ENCODE measurements at regions of chr11 and their contacts with region 1.

Region 1: GRCh38 chr11:32792948-32793475 is 1.4 kb downstream of the CCDC73 start:
- DNase-seq: peak; percentile 26
- ATAC-seq: peak; percentile 92
- H3K4me3 ChIP-seq: no peak overlapping the region
- H3K27ac ChIP-seq: no peak overlapping the region
- H3K4me1 ChIP-seq: no peaks in the 10 kb centered on the region
- H3K27me3 ChIP-seq: no peaks in the 10 kb centered on the region
- CTCF ChIP-seq: peak; percentile 68 to 81 (median 80)
- EP300 ChIP-seq: no peak
- POLR2A ChIP-seq: no peak
- RAD21 ChIP-seq: peak; percentile 83

Region 2: GRCh38 chr11:32374261-32374711 is 418.7 kb before region 1 on chr11:
- CTCF ChIA-PET with region 1: interaction called, 5 read pairs
- POLR2A ChIA-PET with region 1: no interaction called
- RAD21 ChIA-PET with region 1: no interaction called
- SMC1A ChIA-PET with region 1: no interaction called
- in situ Hi-C with region 1: no loop called
- intact Hi-C with region 1: loop called (anchors 2 kb)
- DNase-seq: peak; percentile 25
- ATAC-seq: peak; percentile 96
- H3K4me3 ChIP-seq: no peak overlapping the region
- H3K27ac ChIP-seq: no peak overlapping the region
- H3K4me1 ChIP-seq: no peaks in the 10 kb centered on the region; the same call in 1 of the 2 replicates
- H3K27me3 ChIP-seq: no peaks in the 10 kb centered on the region
- CTCF ChIP-seq: peak; percentile 57 to 72 (median 65)
- EP300 ChIP-seq: no peak
- POLR2A ChIP-seq: no peak
- RAD21 ChIP-seq: peak; percentile 59

Region 3: DNA sequence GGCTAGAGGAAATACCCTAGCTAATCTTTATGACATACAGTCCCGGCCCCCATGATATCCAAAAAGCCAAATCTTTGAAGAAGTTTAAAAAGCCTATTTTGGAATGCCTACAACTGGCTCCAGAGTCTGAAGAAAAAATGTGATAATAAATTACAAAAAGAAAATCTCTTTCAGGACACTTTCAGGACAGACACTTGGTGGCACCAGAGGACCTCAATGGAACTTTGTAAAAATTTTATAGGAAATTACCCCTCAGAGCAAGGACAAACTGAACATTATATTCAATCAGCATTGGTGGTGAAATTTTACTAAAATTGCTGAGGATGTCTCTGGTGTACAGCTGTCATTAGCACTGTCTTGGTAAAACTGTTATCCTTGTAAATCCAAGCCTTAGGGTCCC is 79.5 kb before region 1 on chr11:
- CTCF ChIA-PET with region 1: interaction called, 62 read pairs
- POLR2A ChIA-PET with region 1: no interaction called
- RAD21 ChIA-PET with region 1: interaction called, 8 read pairs
- SMC1A ChIA-PET with region 1: interaction called, 45 read pairs
- in situ Hi-C with region 1: no loop called
- intact Hi-C with region 1: loop called (anchors 1 kb)
- DNase-seq: no peak
- ATAC-seq: no peak
- H3K4me3 ChIP-seq: no peak overlapping the region
- H3K27ac ChIP-seq: no peak overlapping the region
- H3K4me1 ChIP-seq: no peaks in the 10 kb centered on the region
- H3K27me3 ChIP-seq: no peaks in the 10 kb centered on the region
- CTCF ChIP-seq: peak; percentile 16 to 51 (median 19); a peak in 3 of 6 replicates
- EP300 ChIP-seq: no peak
- POLR2A ChIP-seq: no peak
- RAD21 ChIP-seq: peak; percentile 69

Region 4: DNA sequence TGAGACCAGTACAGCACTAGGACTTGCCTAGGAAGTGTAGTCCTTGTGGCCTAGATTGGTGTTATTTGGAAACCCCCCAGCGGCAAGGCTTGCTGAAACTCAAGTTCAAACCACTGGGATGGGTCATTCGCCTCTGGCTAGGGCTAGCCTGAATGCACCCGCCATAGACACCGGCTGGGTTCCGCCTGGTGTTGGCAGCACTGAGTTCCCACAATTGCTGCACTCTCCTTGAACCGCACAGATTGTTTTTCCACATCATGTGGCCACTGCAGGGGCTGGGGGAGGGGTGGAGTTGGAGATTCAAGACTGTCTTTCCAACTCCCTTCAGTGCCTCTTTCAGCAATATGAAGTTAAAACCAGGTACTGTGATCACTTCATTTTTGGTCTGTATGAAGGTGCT is 41.6 kb before region 1 on chr11:
- CTCF ChIA-PET with region 1: interaction called, 82 read pairs
- POLR2A ChIA-PET with region 1: no interaction called
- RAD21 ChIA-PET with region 1: interaction called, 25 read pairs
- SMC1A ChIA-PET with region 1: interaction called, 34 read pairs
- in situ Hi-C with region 1: loop called (anchors 5 kb)
- intact Hi-C with region 1: loop called (anchors 1 kb)
- DNase-seq: no peak
- ATAC-seq: peak; percentile 27
- H3K4me3 ChIP-seq: no peak overlapping the region
- H3K27ac ChIP-seq: no peak overlapping the region
- H3K4me1 ChIP-seq: no peaks in the 10 kb centered on the region
- H3K27me3 ChIP-seq: no peaks in the 10 kb centered on the region; a peak in 1 of 4 replicates
- CTCF ChIP-seq: no peak
- EP300 ChIP-seq: no peak
- POLR2A ChIP-seq: no peak
- RAD21 ChIP-seq: no peak

Region 5: GRCh38 chr11:32758291-32758690 is 34.7 kb before region 1 on chr11:
- CTCF ChIA-PET with region 1: interaction called, 82 read pairs
- POLR2A ChIA-PET with region 1: no interaction called
- RAD21 ChIA-PET with region 1: interaction called, 25 read pairs
- SMC1A ChIA-PET with region 1: interaction called, 15 read pairs
- in situ Hi-C with region 1: loop called (anchors 5 kb)
- intact Hi-C with region 1: no loop called
- DNase-seq: no peak
- ATAC-seq: no peak
- H3K4me3 ChIP-seq: no peak overlapping the region
- H3K27ac ChIP-seq: no peak overlapping the region
- H3K4me1 ChIP-seq: no peaks in the 10 kb centered on the region
- H3K27me3 ChIP-seq: no peaks in the 10 kb centered on the region
- CTCF ChIP-seq: no peak
- EP300 ChIP-seq: no peak
- POLR2A ChIP-seq: no peak
- RAD21 ChIP-seq: no peak

Region 6: GRCh38 chr11:32775908-32776307 is 17.1 kb before region 1 on chr11:
- CTCF ChIA-PET with region 1: interaction called, 16 read pairs
- POLR2A ChIA-PET with region 1: no interaction called
- RAD21 ChIA-PET with region 1: interaction called, 6 read pairs
- SMC1A ChIA-PET with region 1: interaction called, 12 read pairs
- in situ Hi-C with region 1: no loop called
- intact Hi-C with region 1: no loop called
- DNase-seq: no peak
- ATAC-seq: peak; percentile 86
- H3K4me3 ChIP-seq: peak overlapping the region; percentile 4; the same call in 1 of the 2 replicates
- H3K27ac ChIP-seq: peak overlapping the region; percentile 31
- H3K4me1 ChIP-seq: no peaks in the 10 kb centered on the region
- H3K27me3 ChIP-seq: no peaks in the 10 kb centered on the region
- CTCF ChIP-seq: no peak
- EP300 ChIP-seq: no peak
- POLR2A ChIP-seq: no peak
- RAD21 ChIP-seq: no peak

Region 7: DNA sequence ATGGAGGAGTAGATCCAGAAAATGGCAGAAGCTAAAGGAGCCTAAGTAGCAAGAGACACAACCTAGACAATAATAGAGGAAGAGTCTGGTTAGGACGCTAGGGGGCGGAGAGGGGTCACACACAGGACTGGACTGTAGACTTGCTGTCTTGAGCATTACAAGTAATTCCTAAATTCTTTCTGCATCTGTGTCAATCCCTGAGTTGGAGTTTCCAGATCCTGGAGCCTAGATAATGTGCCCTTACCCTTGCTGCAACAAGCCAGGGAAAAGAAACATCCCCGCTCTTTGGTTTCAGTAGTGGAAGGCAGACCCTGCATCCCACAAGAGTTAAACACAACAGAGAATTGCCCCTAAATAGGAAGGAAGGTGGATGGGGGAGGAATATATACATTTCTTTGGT is 16.3 kb after region 1 on chr11:
- CTCF ChIA-PET with region 1: interaction called, 10 read pairs
- POLR2A ChIA-PET with region 1: no interaction called
- RAD21 ChIA-PET with region 1: no interaction called
- SMC1A ChIA-PET with region 1: interaction called, 6 read pairs
- in situ Hi-C with region 1: no loop called
- intact Hi-C with region 1: no loop called
- DNase-seq: no peak
- ATAC-seq: peak; percentile 100
- H3K4me3 ChIP-seq: no peak overlapping the region
- H3K27ac ChIP-seq: no peak overlapping the region
- H3K4me1 ChIP-seq: no peaks in the 10 kb centered on the region
- H3K27me3 ChIP-seq: no peaks in the 10 kb centered on the region
- CTCF ChIP-seq: peak; percentile 85 to 86 (median 86)
- EP300 ChIP-seq: no peak
- POLR2A ChIP-seq: no peak
- RAD21 ChIP-seq: peak; percentile 83

Region 8: GRCh38 chr11:32884770-32885384 is 91.9 kb after region 1 on chr11:
- CTCF ChIA-PET with region 1: no interaction called
- POLR2A ChIA-PET with region 1: no interaction called
- RAD21 ChIA-PET with region 1: no interaction called
- SMC1A ChIA-PET with region 1: no interaction called
- in situ Hi-C with region 1: no loop called
- intact Hi-C with region 1: no loop called
- DNase-seq: no peak
- ATAC-seq: peak; percentile 89
- H3K4me3 ChIP-seq: no peak overlapping the region
- H3K27ac ChIP-seq: no peak overlapping the region
- H3K4me1 ChIP-seq: no peaks in the 10 kb centered on the region
- H3K27me3 ChIP-seq: no peaks in the 10 kb centered on the region
- CTCF ChIP-seq: peak; percentile 60 to 63 (median 61)
- EP300 ChIP-seq: no peak
- POLR2A ChIP-seq: no peak
- RAD21 ChIP-seq: peak; percentile 52

Measured in GM12878 (cell line).